ENCODE measurements at regions of chrX and their contacts with region 1.

Region 1: GRCh38 chrX:48761674-48762471 is at the start of gene GLOD5:
- DNase-seq: no peak
- ATAC-seq: peak; percentile 97
- H3K4me3 ChIP-seq: no peak within 1 kb of the TSS
- H3K27ac ChIP-seq: no peak within 1 kb of the TSS
- H3K4me1 ChIP-seq: no peaks in the 10 kb centered on the region
- H3K27me3 ChIP-seq: no peaks in the 10 kb centered on the region
- CTCF ChIP-seq: peak; percentile 61; the same call in 1 of the 2 replicates
- total RNA-seq, gene GLOD5: not detected

Region 2: GRCh38 chrX:46782034-46782433 is 1979.8 kb before region 1 on chrX:
- CTCF ChIA-PET with region 1: interaction called, 10 read pairs
- POLR2A ChIA-PET with region 1: no interaction called
- in situ Hi-C with region 1: no loop called
- intact Hi-C with region 1: no loop called
- DNase-seq: no peak
- ATAC-seq: no peak
- H3K4me3 ChIP-seq: no peak overlapping the region
- H3K27ac ChIP-seq: no peak overlapping the region
- H3K4me1 ChIP-seq: peaks cover 3% of the 10 kb centered on the region; the same call in 1 of the 2 replicates
- H3K27me3 ChIP-seq: no peaks in the 10 kb centered on the region
- CTCF ChIP-seq: no peak

Measured in Panc1 (cell line).